ENCODE measurements at regions of chr3 and their contacts with region 1.

Region 1: DNA sequence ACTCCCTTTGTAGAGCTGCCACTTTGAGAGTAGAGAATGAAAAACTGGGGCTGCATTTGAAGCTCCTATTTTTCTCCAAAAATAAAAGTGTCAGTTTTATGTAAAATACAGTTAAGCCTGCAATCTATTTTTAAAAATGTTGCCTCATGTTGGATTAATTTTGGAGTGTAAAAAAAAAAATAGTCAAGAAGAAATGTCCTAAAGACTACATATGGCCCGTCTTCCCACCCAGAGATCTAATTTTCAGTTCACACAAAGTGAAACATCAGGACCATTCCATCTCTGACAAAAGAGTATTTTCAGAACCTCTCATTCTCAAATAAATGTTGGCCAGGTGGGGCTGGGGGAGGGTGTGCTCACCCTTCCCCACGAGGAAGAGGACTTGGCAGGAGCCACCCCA is 62.7 kb downstream of the HHLA2 start:
- DNase-seq: no peak
- H3K4me3 ChIP-seq: no peak overlapping the region
- H3K27ac ChIP-seq: no peak overlapping the region
- H3K4me1 ChIP-seq: no peaks in the 10 kb centered on the region
- H3K27me3 ChIP-seq: no peaks in the 10 kb centered on the region
- CTCF ChIP-seq: no peak
- POLR2A ChIP-seq: no peak

Region 2: GRCh38 chr3:108378153-108378951 is 19.3 kb after region 1 on chr3:
- intact Hi-C with region 1: loop called (anchors 2 kb)
- DNase-seq: no peak
- H3K4me3 ChIP-seq: no peak overlapping the region
- H3K27ac ChIP-seq: no peak overlapping the region
- H3K4me1 ChIP-seq: no peaks in the 10 kb centered on the region
- H3K27me3 ChIP-seq: no peaks in the 10 kb centered on the region
- CTCF ChIP-seq: no peak
- POLR2A ChIP-seq: no peak